ENCODE measurements at regions of chr11 and their contacts with region 1.

Region 1: GRCh38 chr11:10878408-10879214 is 20.8 kb upstream of the ZBED5 start:
- DNase-seq: peak; percentile 55
- H3K4me3 Mint-ChIP-seq: no peak overlapping the region
- H3K27ac Mint-ChIP-seq: peak overlapping the region; percentile 86
- H3K4me1 Mint-ChIP-seq: peaks cover 47% of the 10 kb centered on the region
- H3K27me3 Mint-ChIP-seq: no peaks in the 10 kb centered on the region
- CTCF ChIP-seq: peak; percentile 82

Region 2: DNA sequence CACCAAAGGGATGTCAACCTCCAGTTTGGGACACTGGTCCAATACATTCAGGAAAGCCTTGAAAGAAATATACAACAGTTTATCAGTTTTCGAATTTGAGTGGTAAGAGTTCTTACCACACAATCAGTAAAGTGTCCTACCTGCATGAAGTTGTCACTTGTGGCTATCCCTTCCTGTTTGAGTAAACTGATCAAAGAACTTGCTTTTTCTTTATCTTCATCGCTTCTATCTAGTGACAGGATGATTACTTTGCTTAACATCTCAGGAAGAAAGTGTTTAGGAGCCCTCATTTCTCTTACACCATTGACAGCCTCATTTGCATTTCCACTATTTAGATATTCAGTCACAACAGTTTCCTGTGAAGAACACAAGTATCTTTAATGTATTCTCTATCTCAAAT is 78.3 kb before region 1 on chr11:
- CTCF ChIA-PET with region 1: no interaction called
- intact Hi-C with region 1: no loop called
- DNase-seq: no peak
- H3K4me3 Mint-ChIP-seq: no peak overlapping the region
- H3K27ac Mint-ChIP-seq: no peak overlapping the region
- H3K4me1 Mint-ChIP-seq: peaks cover 4% of the 10 kb centered on the region
- H3K27me3 Mint-ChIP-seq: no peaks in the 10 kb centered on the region
- CTCF ChIP-seq: no peak

Region 3: GRCh38 chr11:10922944-10923343 is 44.3 kb after region 1 on chr11:
- CTCF ChIA-PET with region 1: no interaction called
- intact Hi-C with region 1: loop called (anchors 1 kb)
- DNase-seq: no peak
- H3K4me3 Mint-ChIP-seq: no peak overlapping the region
- H3K27ac Mint-ChIP-seq: no peak overlapping the region
- H3K4me1 Mint-ChIP-seq: peaks cover 18% of the 10 kb centered on the region
- H3K27me3 Mint-ChIP-seq: no peaks in the 10 kb centered on the region
- CTCF ChIP-seq: no peak